CD4-positive, alpha-beta memory T cell (primary cell): ENCODE measurements at regions of chr2 and their contacts with region 1.

Region 1: DNA sequence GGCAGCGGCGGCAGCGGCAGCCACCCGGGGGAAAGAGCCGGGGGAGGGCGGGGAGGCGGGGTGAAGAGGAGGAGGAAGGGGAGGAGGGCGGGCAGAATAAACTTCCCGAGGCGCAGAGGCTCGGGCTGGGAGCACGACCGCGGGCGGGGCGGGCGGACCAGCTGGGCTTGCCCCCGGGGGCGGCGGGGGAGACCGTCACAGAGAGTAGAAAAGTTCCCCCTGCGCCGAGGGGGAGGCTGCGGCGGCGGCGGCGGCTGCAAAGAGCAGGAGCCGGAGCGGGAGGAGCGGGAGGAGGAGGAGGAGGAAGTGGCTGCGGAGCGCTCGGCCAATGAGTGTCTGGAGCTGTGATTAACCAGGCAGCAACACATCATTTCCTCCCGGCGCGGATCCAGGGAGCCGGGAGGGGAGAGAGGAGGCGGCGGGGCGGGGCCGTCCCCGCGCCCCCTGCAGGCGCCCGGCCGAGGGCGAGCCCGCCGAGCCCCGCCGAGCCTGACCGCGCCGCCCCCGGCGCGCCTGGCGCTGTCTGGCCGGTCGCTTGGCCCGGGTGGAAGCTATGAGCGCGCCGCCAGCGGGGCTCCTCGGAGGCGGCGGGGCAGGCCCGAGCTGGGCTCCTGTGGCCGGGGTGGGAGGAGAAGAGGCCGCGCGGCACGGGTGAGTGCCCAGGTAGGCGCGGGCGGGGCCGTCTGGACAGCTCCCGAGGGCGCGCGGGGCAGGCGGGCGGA is at the start of gene ACVR1:
- DNase-seq: peak; percentile 78 to 90 (median 80)
- H3K4me3 ChIP-seq: peak within 1 kb of the TSS; percentile 74 to 76
- H3K4me3 Mint-ChIP-seq: peak within 1 kb of the TSS; percentile 94 to 100 (median 96)
- H3K27ac ChIP-seq: peak within 1 kb of the TSS; percentile 66
- H3K27ac Mint-ChIP-seq: peak within 1 kb of the TSS; percentile 88 to 96 (median 93)
- H3K4me1 ChIP-seq: peaks cover 71% of the 10 kb centered on the region
- H3K4me1 Mint-ChIP-seq: peaks cover 46 to 69% (median 60%) of the 10 kb centered on the region in 4 donors
- H3K27me3 ChIP-seq: no peaks in the 10 kb centered on the region
- H3K27me3 Mint-ChIP-seq: no peaks in the 10 kb centered on the region
- total RNA-seq, gene ACVR1: 26.9 to 31.9 TPM

Region 2: DNA sequence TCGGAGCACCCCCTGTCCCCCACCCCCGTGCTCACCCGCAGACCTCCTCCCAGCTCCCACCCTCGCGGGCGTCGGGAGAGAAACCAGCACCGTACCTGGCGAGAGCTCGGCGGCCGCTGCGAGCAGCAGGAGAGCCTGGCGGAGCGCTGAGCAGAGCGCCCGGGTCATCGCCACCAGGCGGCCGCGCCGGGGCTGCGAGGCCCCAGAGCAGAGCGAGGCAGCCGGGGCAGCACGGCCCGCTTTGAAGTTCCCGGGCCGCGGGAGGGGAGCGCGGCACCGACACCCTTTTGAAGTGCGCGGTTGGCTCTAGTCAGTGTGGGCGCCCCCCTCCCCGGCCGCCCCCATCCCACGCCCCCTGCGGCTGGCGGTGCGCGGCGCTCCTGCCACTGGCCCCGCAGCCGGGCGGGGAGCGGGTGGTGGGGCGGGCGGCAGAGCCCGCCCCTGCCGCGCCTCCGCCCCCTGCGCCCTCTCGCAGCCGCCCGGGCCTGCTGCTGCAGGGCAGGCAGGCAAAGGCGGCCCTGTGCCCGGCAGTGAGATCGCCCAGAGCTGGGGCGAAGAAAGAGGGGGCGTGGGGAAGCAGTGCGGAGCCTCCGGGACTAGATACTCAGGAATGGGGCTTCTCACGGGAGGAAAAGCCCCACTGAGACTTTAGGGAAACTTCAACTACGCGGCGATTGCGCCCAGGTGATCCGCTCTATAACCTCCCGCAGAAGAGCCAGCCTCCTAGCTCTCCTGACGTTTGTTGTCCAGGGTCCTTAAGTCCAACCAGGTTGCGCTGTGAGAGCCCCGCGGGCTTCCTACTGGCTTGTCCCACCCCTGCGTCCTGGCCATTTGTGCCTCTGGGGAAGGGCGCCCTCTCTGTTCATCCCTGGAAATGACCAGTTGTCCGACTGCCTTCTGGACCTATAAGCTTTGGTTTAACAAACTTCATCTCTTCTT is 247.5 kb before region 1 on chr2 and contains the start of gene ACVR1C:
- CTCF ChIA-PET with region 1: interaction called, 3 read pairs
- POLR2A ChIA-PET with region 1: no interaction called
- intact Hi-C with region 1: loop called (anchors 1 kb)
- DNase-seq: peak; percentile 70 to 81 (median 75)
- H3K4me3 ChIP-seq: peak within 1 kb of the TSS; percentile 45 to 68
- H3K4me3 Mint-ChIP-seq: peak within 1 kb of the TSS; percentile 92 to 98 (median 95)
- H3K27ac ChIP-seq: peak within 1 kb of the TSS; percentile 58
- H3K27ac Mint-ChIP-seq: peak within 1 kb of the TSS; percentile 85 to 94 (median 89)
- H3K4me1 ChIP-seq: peaks cover 39% of the 10 kb centered on the region
- H3K4me1 Mint-ChIP-seq: peaks cover 22 to 48% (median 33%) of the 10 kb centered on the region in 4 donors
- H3K27me3 ChIP-seq: no peaks in the 10 kb centered on the region
- H3K27me3 Mint-ChIP-seq: peaks cover 0 to 2% of the 10 kb centered on the region in 2 donors
- total RNA-seq, gene ACVR1C: 6.3 to 6.9 TPM

Region 3: DNA sequence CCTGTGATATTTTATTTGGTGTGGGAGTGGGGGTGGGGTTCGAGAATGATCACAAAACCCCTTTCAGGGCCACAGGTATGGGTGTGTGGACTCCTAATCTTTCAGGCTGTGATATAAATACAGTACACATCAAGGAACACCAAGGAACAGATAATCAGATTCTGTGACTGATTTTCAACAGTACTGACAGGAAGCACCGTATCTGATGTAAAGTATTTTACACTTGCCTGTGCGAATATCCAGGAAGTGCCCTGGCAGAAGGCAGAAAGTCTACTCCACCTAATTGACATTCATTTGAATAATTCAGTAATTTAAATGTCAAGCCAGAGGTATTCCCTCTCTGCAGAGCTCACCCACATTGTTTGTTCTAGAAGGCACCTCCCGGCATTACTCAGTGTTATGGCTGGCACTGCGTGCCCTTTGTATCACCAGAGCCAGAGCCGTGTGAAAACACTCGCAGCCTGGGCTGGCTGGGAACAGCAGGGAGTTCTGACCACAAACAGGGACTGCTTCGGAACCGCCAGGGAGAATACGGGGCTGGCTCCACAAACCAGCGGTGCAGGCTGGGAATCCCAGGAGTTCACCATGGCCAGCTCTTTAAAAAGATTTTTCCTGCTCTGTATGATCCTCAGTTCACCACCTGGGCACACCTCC is 91.9 kb before region 1 on chr2:
- CTCF ChIA-PET with region 1: interaction called, 4 read pairs
- POLR2A ChIA-PET with region 1: interaction called, 3 read pairs
- intact Hi-C with region 1: loop called (anchors 5 kb)
- DNase-seq: peak in 3 of 5 donors; percentile 8 to 15 (median 10)
- H3K4me3 ChIP-seq: no peak overlapping the region
- H3K4me3 Mint-ChIP-seq: peak overlapping the region in 6 of 8 donors; percentile 23 to 43 (median 26)
- H3K27ac ChIP-seq: no peak overlapping the region
- H3K27ac Mint-ChIP-seq: peak overlapping the region; percentile 37 to 87 (median 71)
- H3K4me1 ChIP-seq: peaks cover 25% of the 10 kb centered on the region
- H3K4me1 Mint-ChIP-seq: peaks cover 32 to 62% (median 40%) of the 10 kb centered on the region in 4 donors
- H3K27me3 ChIP-seq: no peaks in the 10 kb centered on the region
- H3K27me3 Mint-ChIP-seq: no peaks in the 10 kb centered on the region

Region 4: DNA sequence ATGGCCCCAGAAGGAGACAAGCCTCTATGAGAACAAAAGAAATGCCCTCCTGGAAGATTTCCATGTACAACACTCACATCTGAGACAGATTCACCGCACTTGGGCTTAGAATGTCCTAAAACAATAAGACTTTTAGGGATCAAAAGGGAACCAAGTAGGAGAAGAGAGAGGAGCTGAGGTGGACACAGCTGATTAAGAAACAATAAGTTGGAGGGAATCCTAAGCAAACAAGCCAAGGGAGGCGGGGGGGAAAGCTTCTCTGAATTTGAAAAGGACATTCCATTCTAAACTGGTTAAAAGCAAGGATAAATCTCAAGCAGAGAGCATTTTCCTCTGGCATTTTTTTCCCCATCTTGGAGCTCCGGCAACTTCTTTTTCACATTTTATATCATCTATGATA is 10.0 kb before region 1 on chr2:
- CTCF ChIA-PET with region 1: interaction called, 12 read pairs
- POLR2A ChIA-PET with region 1: interaction called, 5 read pairs
- intact Hi-C with region 1: no loop called
- DNase-seq: no peak
- H3K4me3 ChIP-seq: no peak overlapping the region
- H3K4me3 Mint-ChIP-seq: no peak overlapping the region
- H3K27ac ChIP-seq: no peak overlapping the region
- H3K27ac Mint-ChIP-seq: no peak overlapping the region
- H3K4me1 ChIP-seq: peaks cover 50% of the 10 kb centered on the region
- H3K4me1 Mint-ChIP-seq: peaks cover 43 to 62% (median 49%) of the 10 kb centered on the region in 4 donors
- H3K27me3 ChIP-seq: no peaks in the 10 kb centered on the region
- H3K27me3 Mint-ChIP-seq: no peaks in the 10 kb centered on the region

Region 5: DNA sequence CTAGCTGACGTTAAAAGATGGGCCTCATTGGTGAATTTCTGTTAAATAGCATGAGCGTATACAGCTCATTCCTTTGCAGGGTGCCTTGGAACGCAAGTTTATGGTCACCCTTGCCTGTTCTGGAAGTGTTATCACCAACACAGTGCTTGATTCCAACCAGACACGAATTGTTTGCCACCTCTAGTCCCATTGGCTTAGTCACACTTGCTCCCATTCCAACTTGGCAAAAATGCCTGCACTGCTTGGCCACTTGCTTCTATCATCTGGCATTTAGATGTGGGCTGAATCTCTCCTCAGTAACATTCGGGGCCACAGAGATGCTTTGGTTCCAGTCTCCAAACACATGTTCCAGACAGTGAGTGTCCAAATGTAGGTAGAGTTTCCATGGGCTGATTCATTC is 27.4 kb after region 1 on chr2:
- CTCF ChIA-PET with region 1: interaction called, 37 read pairs
- POLR2A ChIA-PET with region 1: interaction called, 308 read pairs
- intact Hi-C with region 1: no loop called
- DNase-seq: no peak
- H3K4me3 ChIP-seq: no peak overlapping the region
- H3K4me3 Mint-ChIP-seq: no peak overlapping the region
- H3K27ac ChIP-seq: no peak overlapping the region
- H3K27ac Mint-ChIP-seq: peak overlapping the region in 2 of 7 donors; percentile 12 to 48
- H3K4me1 ChIP-seq: peaks cover 31% of the 10 kb centered on the region
- H3K4me1 Mint-ChIP-seq: peaks cover 27 to 31% (median 29%) of the 10 kb centered on the region in 4 donors
- H3K27me3 ChIP-seq: no peaks in the 10 kb centered on the region
- H3K27me3 Mint-ChIP-seq: no peaks in the 10 kb centered on the region

Region 6: DNA sequence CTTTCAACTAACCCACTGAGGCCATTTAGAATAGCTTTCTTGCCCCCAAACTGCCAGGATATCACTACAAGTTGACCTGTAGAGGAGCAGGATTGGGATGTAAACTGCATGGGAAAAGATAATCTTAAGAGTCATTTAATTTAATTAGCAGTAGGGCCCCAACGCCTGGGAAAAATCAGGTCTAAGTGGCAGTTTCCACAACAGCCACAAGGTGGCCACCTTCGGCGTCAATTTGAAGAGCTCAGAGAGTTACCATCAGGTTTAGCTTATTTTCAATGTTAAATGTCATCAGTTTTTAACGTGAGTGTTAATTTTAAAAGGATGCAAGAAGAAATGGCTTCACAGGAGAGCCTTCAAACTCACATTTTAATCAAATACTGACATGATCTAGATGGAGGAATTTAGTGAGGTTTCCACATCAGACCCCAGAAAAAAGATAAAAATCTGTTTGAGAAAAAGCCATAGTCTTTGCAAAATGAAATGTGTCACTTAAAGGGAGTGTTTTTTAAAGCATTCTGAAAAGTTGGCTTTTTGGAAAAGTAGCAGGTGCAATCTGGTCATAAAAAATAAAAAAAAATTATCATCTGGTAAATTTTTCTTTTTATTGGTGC is 148.2 kb after region 1 on chr2:
- CTCF ChIA-PET with region 1: no interaction called
- POLR2A ChIA-PET with region 1: no interaction called
- intact Hi-C with region 1: no loop called
- DNase-seq: peak in 4 of 5 donors; percentile 28 to 45 (median 37)
- H3K4me3 ChIP-seq: no peak overlapping the region
- H3K4me3 Mint-ChIP-seq: no peak overlapping the region
- H3K27ac ChIP-seq: no peak overlapping the region
- H3K27ac Mint-ChIP-seq: no peak overlapping the region
- H3K4me1 ChIP-seq: peaks cover 10% of the 10 kb centered on the region
- H3K4me1 Mint-ChIP-seq: peaks cover 4 to 10% (median 7%) of the 10 kb centered on the region in 4 donors
- H3K27me3 ChIP-seq: no peaks in the 10 kb centered on the region
- H3K27me3 Mint-ChIP-seq: peaks cover 0 to 2% of the 10 kb centered on the region in 2 donors